ENCODE measurements at regions of chr4 and their contacts with region 1.

Region 1: GRCh38 chr4:52861879-52862616 is at the start of gene RASL11B:
- DNase-seq: peak; percentile 76
- H3K4me3 ChIP-seq: peak within 1 kb of the TSS; percentile 43
- H3K27ac ChIP-seq: no peak within 1 kb of the TSS
- H3K4me1 ChIP-seq: no peaks in the 10 kb centered on the region
- H3K27me3 ChIP-seq: no peaks in the 10 kb centered on the region
- CTCF ChIP-seq: no peak
- total RNA-seq, gene RASL11B: 0.67 and 0.90 TPM in 2 replicates

Region 2: DNA sequence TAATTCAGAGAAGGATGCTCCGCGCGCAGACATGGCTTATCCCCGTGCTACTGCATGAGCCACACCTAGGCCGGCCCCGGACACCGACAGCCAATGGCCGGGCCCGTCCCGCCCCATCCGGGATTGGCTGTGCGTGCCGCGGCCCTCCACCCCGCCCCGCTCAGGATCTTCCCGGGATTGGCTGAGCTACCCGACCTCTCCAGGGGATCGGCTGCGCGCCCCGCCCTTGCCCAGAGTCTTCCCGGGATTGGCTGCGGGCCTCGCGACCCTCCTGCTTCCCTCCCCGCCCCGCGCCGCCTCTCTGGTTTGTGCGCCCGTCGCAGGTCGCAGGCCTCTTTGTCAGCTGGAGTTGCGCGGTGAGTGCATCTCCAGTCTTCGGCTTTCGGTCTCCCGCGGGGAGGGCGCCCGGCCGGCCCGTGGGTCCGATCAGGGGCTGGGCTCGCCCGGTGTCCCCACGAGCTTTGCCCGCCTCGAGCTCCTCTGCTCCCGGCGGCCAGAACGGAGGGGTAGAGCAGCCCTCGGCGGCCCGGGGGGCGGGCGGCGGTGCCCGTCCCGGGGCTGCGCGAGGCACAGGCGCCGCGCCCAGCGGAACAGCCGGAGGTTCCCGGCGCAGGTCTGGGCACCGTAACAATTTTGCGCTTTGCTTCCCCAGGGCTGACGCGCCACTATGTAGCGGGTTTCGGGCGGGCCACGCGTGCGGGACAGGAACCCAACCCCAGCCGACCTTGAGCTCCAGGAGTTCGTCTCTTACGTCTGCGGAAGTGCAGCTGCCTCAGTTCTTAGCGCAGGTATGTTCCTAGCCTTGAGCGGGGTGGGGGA is 149.7 kb before region 1 on chr4:
- CTCF ChIA-PET with region 1: no interaction called
- POLR2A ChIA-PET with region 1: no interaction called
- intact Hi-C with region 1: loop called (anchors 10 kb)
- DNase-seq: peak; percentile 94
- H3K4me3 ChIP-seq: peak overlapping the region; percentile 79
- H3K27ac ChIP-seq: peak overlapping the region; percentile 85
- H3K4me1 ChIP-seq: peaks cover 11% of the 10 kb centered on the region
- H3K27me3 ChIP-seq: no peaks in the 10 kb centered on the region
- CTCF ChIP-seq: no peak